Activated naive CD4-positive, alpha-beta T cell treated with anti-CD3 and anti-CD28 coated beads for 36 hours (primary cell): ENCODE measurements at regions of chr5 and their contacts with region 1.

Region 1: DNA sequence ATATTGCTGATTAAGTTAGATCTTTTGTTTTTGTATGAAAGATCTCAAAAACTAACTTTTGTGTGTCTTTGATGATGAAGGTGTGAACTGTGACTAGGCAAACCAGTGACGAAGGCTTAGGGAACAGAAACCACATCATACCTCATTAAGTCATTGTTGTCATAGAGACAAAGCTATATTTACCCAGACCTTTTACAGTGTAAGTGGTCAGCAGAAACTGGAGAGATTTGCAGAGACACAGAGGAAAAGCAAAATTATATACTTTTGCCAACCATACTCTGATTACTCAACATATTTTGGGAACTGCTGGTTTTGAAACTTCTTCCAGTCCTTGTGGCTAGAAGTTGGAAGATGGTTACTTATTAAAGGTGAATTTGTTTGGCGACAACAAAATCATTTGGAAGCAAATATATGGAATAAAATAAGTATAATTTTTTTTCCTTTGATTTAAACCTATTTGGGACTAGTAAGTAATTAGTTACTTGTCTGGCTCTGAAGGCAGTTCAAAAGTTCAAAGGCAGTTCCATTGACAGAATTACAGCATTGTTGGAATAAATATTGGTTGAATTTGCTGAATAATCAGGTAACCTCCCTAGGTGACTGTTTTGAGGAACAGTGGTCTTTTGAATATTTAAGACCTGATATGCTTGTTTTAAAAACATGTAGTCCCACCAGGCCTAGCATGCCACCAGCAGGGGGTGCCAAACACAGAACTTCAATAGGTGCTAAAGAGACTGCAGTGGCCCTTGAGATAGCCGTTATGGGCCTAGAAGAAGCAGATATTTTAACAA is 103.8 kb downstream of the RPS23 start:
- DNase-seq: peak; percentile 82
- H3K4me3 Mint-ChIP-seq: no peak overlapping the region
- H3K27ac Mint-ChIP-seq: no peak overlapping the region
- H3K4me1 Mint-ChIP-seq: peaks cover 4% of the 10 kb centered on the region
- H3K27me3 Mint-ChIP-seq: no peaks in the 10 kb centered on the region

Region 2: GRCh38 chr5:82218374-82219156 is 44.2 kb after region 1 on chr5:
- CTCF ChIA-PET with region 1: no interaction called
- intact Hi-C with region 1: no loop called
- DNase-seq: no peak
- H3K4me3 Mint-ChIP-seq: no peak overlapping the region
- H3K27ac Mint-ChIP-seq: no peak overlapping the region
- H3K4me1 Mint-ChIP-seq: no peaks in the 10 kb centered on the region
- H3K27me3 Mint-ChIP-seq: no peaks in the 10 kb centered on the region

Region 3: GRCh38 chr5:82259172-82259800 is 85.0 kb after region 1 on chr5:
- CTCF ChIA-PET with region 1: interaction called, 3 read pairs
- intact Hi-C with region 1: loop called (anchors 1 kb)
- DNase-seq: no peak
- H3K4me3 Mint-ChIP-seq: no peak overlapping the region
- H3K27ac Mint-ChIP-seq: no peak overlapping the region
- H3K4me1 Mint-ChIP-seq: peaks cover 1% of the 10 kb centered on the region
- H3K27me3 Mint-ChIP-seq: no peaks in the 10 kb centered on the region